Heart right ventricle (tissue), 16 donors: ENCODE measurements at regions of chr1 and their contacts with region 1.

Region 1: GRCh38 chr1:186985889-186986491 is 157.2 kb downstream of the PLA2G4A start:
- DNase-seq: peak in 1 of 2 donors; percentile 10
- ATAC-seq: peak in 6 of 8 donors; percentile 52 to 74 (median 68)
- H3K4me3 ChIP-seq: no peak overlapping the region
- H3K27ac ChIP-seq: no peak overlapping the region
- H3K4me1 ChIP-seq: peaks cover 0 to 5% (median 0%) of the 10 kb centered on the region in 9 donors
- H3K27me3 ChIP-seq: no peaks in the 10 kb centered on the region
- CTCF ChIP-seq: peak; percentile 21 to 78 (median 73)

Region 2: DNA sequence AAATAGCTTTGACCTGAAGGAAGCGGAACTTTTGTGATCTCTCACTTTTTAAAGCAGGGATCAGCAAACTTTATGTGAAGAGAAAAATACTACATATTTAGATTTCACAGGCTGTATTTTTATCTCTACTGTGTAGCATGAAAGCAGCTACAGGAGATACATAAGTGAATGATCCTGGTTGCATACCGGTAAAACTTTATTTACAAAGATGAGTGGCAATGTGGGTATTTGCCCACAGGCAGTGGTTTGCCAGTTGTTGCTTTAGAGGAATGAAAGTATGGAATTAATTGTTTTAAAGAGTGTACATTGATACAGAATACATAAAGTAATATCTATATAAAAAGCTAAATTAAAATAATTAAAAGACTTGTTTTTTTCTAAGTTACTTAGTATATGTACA is 592.5 kb before region 1 on chr1:
- intact Hi-C with region 1: loop called in 1 of 10 experiments (anchors 10 kb)
- DNase-seq: no peak
- ATAC-seq: no peak
- H3K4me3 ChIP-seq: no peak overlapping the region
- H3K27ac ChIP-seq: no peak overlapping the region
- H3K4me1 ChIP-seq: no peaks in the 10 kb centered on the region
- H3K27me3 ChIP-seq: no peaks in the 10 kb centered on the region
- CTCF ChIP-seq: no peak

Region 3: DNA sequence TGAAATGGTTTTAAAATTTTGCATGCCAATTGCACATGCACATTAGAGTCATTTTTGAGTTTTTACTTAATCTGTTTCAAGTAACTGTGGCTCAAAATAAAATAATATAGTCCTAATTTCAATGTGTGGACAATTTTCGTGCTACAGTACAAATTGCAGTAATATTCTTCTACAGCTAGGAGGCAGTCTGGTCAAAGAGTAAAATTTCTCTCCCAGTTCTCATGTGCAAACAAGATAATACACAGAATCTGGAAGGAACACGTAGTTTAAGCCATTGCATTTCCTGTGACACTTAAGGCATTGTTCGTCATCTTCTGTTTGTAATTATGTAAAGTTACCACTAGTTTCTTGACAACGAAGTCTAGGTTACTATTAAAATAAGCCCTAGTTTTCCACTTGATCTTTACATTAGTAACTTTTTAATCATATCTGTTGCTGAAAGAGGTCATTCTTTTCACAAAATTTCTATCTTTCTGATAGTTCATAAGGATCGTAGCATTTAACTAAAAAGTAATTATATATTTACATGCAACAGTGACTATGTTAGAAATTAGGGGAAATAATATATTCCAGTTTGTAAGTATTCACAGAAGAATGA is 581.4 kb before region 1 on chr1:
- intact Hi-C with region 1: loop called in 5 of 10 experiments (anchors 5 to 10 kb)
- DNase-seq: no peak
- ATAC-seq: peak in 3 of 8 donors; percentile 31 to 42 (median 42)
- H3K4me3 ChIP-seq: no peak overlapping the region
- H3K27ac ChIP-seq: no peak overlapping the region
- H3K4me1 ChIP-seq: no peaks in the 10 kb centered on the region
- H3K27me3 ChIP-seq: no peaks in the 10 kb centered on the region
- CTCF ChIP-seq: peak; percentile 40 to 78 (median 67)

Region 4: DNA sequence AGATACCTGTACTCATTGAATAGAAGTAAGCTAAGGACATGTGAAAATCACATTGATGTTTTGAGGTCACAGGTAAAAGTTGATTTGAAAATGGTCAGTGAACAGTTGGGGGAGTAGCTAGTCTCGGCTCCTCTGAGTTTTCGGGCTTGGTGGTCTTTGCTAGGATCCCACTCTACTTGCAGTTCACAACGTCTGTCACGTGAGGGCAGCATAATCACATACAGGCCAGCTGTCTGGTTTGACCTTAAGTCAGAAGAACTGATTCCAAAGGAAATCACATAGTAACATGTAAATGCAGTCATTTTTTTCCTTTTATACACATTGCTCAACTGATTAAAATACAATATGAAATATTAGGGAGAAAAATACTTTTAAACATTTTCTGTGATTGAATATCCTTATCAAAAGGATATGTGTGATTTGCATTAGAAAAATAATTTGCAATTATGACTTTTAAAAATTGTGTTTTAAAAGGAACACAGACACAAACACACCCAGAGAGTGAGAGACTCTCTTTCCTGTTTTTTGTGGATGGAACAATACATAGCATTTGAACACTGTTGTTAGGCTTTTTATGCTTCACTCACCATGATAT is 503.2 kb before region 1 on chr1:
- intact Hi-C with region 1: loop called in 9 of 10 experiments (anchors 2 to 5 kb)
- DNase-seq: peak; percentile 25 to 30
- ATAC-seq: peak in 5 of 8 donors; percentile 33 to 68 (median 52)
- H3K4me3 ChIP-seq: no peak overlapping the region
- H3K27ac ChIP-seq: no peak overlapping the region
- H3K4me1 ChIP-seq: peaks cover 0 to 6% (median 0%) of the 10 kb centered on the region in 9 donors
- H3K27me3 ChIP-seq: no peaks in the 10 kb centered on the region
- CTCF ChIP-seq: peak; percentile 60 to 91 (median 82)

Region 5: DNA sequence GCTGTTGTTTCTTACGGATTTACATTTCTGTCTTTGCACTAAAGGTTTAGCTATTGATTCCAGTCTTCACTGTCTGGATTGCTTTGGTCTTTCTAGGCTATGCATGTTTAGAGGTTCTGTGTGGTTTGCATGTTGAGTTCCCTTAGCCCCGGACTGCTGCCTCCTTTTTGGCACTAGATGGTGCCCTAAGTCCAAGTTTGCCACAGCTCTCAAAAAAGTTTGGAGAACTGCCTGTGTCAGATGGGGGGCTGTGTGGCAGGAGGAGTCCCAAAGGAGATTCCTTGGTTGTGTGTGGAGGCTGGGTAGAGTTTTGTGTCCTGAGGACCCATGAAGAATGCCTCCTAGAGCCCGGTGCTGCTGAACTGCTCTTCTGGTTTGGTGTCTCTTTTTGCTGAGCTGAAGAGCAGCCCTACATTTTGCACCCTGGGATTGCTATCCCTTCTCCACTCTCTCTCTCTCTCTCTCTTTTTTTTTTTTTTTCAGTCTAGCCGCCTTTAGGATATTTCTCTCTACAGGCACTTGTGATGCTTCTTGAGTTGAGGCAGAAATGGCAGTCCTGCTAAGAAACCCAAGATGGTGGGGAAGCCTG is 380.1 kb before region 1 on chr1:
- intact Hi-C with region 1: loop called (anchors 1 to 5 kb)
- DNase-seq: peak in 1 of 2 donors; percentile 27
- ATAC-seq: peak in 5 of 8 donors; percentile 48 to 83 (median 70)
- H3K4me3 ChIP-seq: no peak overlapping the region
- H3K27ac ChIP-seq: no peak overlapping the region
- H3K4me1 ChIP-seq: no peaks in the 10 kb centered on the region
- H3K27me3 ChIP-seq: no peaks in the 10 kb centered on the region
- CTCF ChIP-seq: peak; percentile 36 to 73 (median 67)

Region 6: GRCh38 chr1:186680245-186681061 is 305.5 kb before region 1 on chr1 and contains the start of gene PTGS2:
- intact Hi-C with region 1: loop called in 1 of 10 experiments (anchors 10 kb)
- DNase-seq: peak; percentile 63 to 73
- ATAC-seq: peak; percentile 91 to 97 (median 94)
- H3K4me3 ChIP-seq: peak within 1 kb of the TSS; percentile 41 to 67 (median 59)
- H3K27ac ChIP-seq: peak within 1 kb of the TSS; percentile 18 to 86 (median 80)
- H3K4me1 ChIP-seq: peaks cover 0 to 15% (median 0%) of the 10 kb centered on the region in 9 donors
- H3K27me3 ChIP-seq: peaks cover 0 to 21% (median 10%) of the 10 kb centered on the region in 7 donors
- CTCF ChIP-seq: peak in 6 of 9 donors; percentile 20 to 55 (median 46)
- total RNA-seq, gene PTGS2: 0.30 to 7.1 (median 1.8) TPM